ENCODE measurements at regions of chr19 and their contacts with region 1.

Region 1: DNA sequence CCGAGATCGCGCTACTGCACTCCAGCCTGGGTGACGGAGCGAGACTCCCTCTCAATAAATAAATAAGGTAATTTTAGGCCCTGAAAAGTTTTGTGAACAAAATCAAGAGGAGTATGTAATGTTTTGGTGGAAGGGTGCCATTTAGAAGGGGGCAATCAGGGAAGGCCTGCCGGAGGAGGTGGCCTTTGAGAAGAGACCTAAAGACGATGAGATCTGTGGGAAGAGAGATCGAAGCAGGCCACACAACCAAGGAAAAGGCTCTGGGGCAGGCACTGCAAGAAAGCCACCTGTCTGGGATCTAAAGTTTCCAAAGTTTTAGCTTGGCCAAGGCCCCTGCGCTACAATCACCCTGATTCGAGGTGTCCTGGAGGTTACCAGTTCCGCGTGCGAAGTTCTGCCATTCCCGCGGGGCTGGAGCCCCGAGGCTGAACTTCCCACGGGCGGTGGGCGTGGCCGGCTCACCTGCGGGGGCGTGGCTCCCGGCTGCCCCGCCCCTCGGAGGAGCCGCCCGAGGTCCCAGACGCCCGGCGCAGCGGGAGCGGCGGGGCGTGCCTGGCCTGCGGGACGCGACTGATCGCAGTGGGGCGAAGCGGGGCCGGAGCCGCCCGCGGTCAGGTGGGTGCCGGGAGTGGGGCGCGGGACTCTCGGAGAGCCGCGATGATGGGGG is at the start of gene KLC3:
- DNase-seq: no peak
- H3K4me3 ChIP-seq: no peak within 1 kb of the TSS
- CTCF ChIP-seq: no peak

Region 2: DNA sequence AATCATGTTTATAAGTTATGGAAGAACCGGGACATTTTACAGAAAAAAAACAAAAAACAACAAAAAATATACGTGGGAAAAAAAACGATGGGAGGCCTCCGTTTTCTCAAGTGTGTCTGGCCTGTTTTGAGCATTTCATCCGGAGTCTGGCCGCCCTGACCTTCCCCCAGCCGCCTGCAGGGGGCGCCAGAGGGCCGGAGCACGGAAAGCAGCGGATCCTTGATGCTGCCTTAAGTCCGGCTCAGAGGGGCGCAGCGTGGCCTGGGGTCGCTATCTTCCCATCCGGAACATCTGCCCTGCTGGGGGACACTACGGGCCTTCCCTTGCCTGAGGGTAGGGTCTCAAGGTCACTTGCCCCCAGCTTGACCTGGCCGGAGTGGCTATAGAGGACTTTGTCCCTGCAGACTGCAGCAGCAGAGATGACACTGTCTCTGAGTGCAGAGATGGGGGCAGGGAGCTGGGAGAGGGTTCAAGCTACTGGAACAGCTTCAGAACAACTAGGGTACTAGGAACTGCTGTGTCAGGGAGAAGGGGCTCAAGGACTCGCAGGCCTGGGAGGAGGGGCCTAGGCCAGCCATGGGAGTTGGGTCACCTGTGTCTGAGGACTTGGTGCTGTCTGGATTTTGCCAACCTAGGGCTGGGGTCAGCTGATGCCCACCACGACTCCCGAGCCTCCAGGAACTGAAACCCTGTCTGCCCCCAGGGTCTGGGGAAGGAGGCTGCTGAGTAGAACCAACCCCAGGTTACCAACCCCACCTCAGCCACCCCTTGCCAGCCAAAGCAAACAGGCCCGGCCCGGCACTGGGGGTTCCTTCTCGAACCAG is 436.6 kb before region 1 on chr19:
- CTCF ChIA-PET with region 1: interaction called, 15 read pairs
- POLR2A ChIA-PET with region 1: no interaction called
- DNase-seq: no peak
- H3K4me3 ChIP-seq: no peak overlapping the region
- CTCF ChIP-seq: peak; percentile 97

Region 3: DNA sequence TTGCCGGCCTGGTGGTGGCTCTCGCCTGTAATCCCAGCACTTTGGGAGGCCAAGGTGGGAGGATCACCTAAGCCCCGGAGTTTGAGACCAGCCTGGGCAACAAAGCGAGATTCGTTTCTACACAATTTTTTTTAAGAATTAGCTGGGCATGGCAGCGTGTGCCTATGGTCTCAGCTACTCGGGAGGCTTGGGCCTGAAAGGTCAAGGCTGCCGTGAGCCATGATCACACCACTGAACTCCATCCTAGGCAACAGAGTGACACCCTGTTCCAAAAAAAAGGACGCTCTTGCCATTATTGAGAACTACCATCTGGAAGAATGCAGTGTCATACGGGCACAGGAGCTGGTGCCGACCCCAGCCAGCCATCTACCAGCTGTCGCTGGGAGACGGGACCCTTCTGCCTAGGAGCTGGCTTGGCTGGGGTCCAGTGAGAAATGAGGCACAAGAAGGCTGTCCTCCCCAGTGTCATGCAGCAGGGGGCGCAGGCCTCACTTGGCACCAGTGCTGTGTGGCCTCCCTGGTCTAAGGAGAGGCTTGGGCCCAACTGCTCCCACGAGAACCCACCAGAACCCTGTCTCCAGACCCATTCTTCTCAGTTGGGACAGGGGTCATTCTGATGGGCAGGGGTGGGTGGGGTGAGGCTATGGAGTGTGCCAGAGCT is 351.3 kb before region 1 on chr19:
- CTCF ChIA-PET with region 1: interaction called, 20 read pairs
- POLR2A ChIA-PET with region 1: no interaction called
- DNase-seq: no peak
- H3K4me3 ChIP-seq: no peak overlapping the region
- CTCF ChIP-seq: peak; percentile 85

Region 4: DNA sequence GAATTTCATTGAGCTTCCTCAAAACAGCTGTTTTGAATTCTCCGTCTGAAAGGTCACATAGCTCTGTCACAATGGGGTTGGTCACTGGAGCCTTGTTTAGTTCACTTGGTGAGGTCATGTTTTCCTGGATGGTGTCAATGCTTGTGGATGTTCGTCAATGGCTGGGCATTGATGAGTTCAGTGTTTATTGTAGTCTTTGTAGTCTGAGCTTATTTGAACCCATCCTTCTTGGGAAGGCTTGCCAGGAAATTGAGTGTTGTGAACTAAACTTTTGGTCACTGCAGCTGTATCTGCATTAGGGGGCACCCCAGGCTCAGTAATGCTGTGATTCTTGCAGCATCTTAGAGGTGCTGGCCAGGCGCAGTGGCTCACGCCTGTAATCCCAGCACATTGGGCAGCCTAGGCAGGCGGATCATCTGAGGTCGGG is 139.8 kb before region 1 on chr19:
- CTCF ChIA-PET with region 1: interaction called, 29 read pairs
- POLR2A ChIA-PET with region 1: no interaction called
- DNase-seq: no peak
- H3K4me3 ChIP-seq: no peak overlapping the region
- CTCF ChIP-seq: peak; percentile 32

Region 5: DNA sequence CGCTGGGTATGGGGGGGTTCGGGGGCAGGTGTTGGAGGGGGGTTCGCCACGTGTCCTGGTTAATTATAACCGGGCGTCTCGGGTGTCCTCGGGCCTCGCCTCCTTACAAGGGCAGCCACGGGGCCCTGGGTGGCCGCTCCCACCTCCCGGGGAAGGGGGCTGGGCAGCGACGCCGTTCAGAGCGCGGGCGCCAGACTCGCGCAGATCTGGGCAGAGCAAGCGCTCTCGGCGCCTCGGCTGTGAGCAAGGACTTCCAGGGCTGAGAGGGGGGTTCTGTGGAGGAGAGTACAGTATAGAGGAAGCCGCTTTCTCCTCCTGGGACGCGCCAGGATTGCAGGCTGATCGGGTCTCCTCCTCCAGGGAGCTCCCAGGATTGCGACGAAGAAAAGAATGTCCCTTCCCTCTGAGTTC is 16.7 kb before region 1 on chr19:
- CTCF ChIA-PET with region 1: interaction called, 57 read pairs
- POLR2A ChIA-PET with region 1: no interaction called
- DNase-seq: no peak
- H3K4me3 ChIP-seq: peak overlapping the region; percentile 33
- CTCF ChIP-seq: no peak

Region 6: DNA sequence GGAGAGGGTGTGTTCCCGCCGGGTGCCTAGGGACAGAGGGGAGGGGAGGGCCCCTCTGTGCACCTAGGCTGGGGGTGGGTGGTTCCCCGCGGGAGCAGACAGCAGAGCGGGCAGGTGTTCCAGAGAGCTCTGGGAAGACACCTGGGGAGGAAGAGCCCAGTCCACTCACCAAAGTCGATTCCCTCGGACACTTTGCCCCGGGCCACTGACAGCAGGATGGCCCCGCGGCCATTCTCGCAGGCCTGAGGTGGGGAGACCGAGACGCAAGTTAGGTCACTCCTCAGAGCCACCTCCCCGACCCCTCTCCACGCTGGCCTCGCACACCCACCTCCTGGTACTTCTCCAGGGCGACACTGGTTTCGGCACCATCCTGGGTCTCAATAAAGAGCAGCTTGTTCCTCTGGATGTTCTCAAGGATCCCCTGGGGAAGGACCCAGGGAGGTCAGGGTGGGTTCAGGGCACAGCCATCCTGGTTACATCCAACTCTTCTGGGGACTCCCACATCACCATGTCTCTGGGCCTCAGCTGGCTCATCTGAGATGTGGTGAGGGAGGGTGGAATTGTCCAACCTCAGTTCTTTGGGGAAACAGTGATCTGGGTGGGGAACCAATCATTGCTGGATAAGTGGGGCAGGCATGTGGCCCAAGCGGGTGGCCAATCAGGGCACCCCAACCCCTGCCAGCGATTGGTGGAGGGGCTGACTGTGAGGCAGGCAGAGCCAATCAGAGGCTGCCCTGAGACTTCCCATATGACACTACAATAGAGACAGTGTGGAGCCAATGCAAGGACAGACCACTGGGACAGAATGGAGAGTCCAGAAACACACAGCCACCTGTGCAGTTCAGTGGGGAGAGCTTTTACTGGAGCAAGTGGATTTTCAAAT is 12.8 kb after region 1 on chr19:
- CTCF ChIA-PET with region 1: interaction called, 18 read pairs
- POLR2A ChIA-PET with region 1: no interaction called
- DNase-seq: no peak
- H3K4me3 ChIP-seq: no peak overlapping the region
- CTCF ChIP-seq: no peak